Activated naive CD4-positive, alpha-beta T cell treated with anti-CD3 and anti-CD28 coated beads for 36 hours (primary cell): ENCODE measurements at regions of chr12 and their contacts with region 1.

Region 1: DNA sequence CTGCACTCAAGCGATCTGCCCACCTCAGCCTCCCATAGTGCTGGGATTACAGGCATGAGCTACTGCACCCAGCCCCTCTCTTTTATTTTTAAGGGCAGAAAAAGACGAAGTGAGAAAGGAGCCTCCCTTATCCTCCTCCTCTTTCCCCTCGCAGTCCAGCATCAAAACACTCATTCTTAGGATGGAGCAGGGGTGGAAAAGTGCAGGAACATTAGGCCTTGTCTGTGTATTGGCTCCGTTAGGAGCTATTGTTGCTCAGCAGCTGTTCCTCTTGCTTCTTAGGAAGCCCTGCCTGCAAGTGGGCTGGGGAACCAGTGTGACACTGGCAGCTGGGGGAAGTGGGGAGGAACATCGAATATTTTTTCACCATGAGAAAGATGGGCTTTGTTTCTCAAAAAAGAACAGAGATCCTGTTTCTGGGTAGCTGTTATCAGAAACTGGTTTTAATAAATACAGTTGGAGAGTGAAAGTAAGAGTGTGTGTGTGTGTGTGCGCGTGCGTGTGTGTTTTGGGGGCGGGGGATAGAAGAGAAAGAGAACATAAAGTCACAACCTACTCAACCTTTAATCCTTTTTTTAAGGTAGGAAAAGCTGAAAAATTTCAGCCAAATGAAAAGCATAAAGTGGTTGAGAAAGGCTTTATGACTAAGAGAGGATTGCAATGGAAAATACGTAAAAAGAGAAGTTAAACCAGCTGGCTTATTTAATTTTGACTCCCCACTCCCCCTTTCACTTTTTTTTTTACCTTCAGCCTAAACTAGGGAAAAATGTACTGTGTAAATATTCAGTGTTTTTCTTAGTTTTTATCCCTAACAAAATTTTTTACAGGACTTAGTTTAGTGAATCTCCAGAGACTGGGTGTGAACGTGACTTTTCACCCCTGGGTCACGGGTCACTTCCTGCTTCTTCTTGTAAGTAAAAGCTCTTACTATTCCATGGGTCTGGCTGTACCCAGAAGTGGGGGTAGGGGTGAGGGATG is 197.2 kb upstream of the PLEKHG7 start:
- DNase-seq: peak; percentile 77
- H3K4me3 Mint-ChIP-seq: peak overlapping the region; percentile 69
- H3K27ac Mint-ChIP-seq: peak overlapping the region; percentile 89
- H3K4me1 Mint-ChIP-seq: peaks cover 56% of the 10 kb centered on the region
- H3K27me3 Mint-ChIP-seq: no peaks in the 10 kb centered on the region

Region 2: GRCh38 chr12:91382081-91382543 is 1123.4 kb before region 1 on chr12:
- CTCF ChIA-PET with region 1: no interaction called
- intact Hi-C with region 1: loop called (anchors 5 kb)
- DNase-seq: peak; percentile 92
- H3K4me3 Mint-ChIP-seq: peak overlapping the region; percentile 76
- H3K27ac Mint-ChIP-seq: no peak overlapping the region
- H3K4me1 Mint-ChIP-seq: peaks cover 5% of the 10 kb centered on the region
- H3K27me3 Mint-ChIP-seq: no peaks in the 10 kb centered on the region

Region 3: GRCh38 chr12:91991399-91992187 is 514.0 kb before region 1 on chr12:
- CTCF ChIA-PET with region 1: no interaction called
- intact Hi-C with region 1: loop called (anchors 2 kb)
- DNase-seq: no peak
- H3K4me3 Mint-ChIP-seq: no peak overlapping the region
- H3K27ac Mint-ChIP-seq: no peak overlapping the region
- H3K4me1 Mint-ChIP-seq: peaks cover 61% of the 10 kb centered on the region
- H3K27me3 Mint-ChIP-seq: no peaks in the 10 kb centered on the region

Region 4: DNA sequence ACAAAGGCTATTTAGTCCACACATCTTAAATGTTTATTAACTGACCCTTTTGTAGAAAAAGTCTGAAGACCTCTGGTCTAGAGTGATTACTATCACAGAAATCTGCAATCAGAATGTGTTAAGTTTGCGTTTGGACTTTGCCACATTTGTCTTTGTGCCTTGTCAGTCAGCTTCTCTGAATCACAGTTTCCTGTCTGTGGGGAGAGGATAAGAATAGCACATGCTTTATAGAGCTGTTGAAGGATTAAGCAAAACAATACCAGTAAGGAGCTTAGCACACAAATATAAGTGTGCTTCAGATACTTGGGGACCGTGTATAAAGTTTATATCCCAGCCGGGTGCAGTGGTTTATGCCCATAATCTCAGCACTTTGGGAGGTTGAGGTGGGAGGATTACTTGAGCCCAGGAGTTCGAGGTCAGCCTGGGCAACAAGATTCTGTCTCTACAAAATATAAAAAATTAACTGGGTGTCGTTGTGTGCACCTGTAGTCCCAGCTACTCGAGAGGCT is 296.9 kb before region 1 on chr12:
- CTCF ChIA-PET with region 1: no interaction called
- intact Hi-C with region 1: loop called (anchors 1 kb)
- DNase-seq: peak; percentile 42
- H3K4me3 Mint-ChIP-seq: peak overlapping the region; percentile 66
- H3K27ac Mint-ChIP-seq: peak overlapping the region; percentile 86
- H3K4me1 Mint-ChIP-seq: peaks cover 45% of the 10 kb centered on the region
- H3K27me3 Mint-ChIP-seq: no peaks in the 10 kb centered on the region

Region 5: DNA sequence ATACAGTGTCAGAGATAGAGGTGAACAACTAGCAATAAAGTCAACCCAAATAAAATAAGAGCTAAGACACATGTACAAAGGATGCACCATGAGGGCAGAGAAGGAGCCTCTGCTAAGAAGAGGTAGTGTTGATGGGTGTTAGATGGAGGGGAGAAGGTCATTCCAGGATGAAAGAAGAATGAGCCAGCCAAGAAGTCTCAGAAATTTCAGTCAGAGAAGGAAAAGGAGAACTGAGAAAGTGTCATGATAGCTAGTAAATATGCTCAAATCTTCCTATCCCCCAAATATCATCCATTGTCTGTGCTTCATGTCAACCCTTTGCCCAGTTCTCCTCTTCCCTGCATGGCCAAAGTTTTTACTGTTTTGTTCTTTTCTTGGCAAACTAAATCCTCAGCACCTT is 134.7 kb before region 1 on chr12:
- CTCF ChIA-PET with region 1: no interaction called
- intact Hi-C with region 1: no loop called
- DNase-seq: no peak
- H3K4me3 Mint-ChIP-seq: no peak overlapping the region
- H3K27ac Mint-ChIP-seq: no peak overlapping the region
- H3K4me1 Mint-ChIP-seq: peaks cover 35% of the 10 kb centered on the region
- H3K27me3 Mint-ChIP-seq: no peaks in the 10 kb centered on the region

Region 6: GRCh38 chr12:92493816-92494215 is 11.7 kb before region 1 on chr12:
- CTCF ChIA-PET with region 1: interaction called, 26 read pairs
- intact Hi-C with region 1: no loop called
- DNase-seq: no peak
- H3K4me3 Mint-ChIP-seq: no peak overlapping the region
- H3K27ac Mint-ChIP-seq: no peak overlapping the region
- H3K4me1 Mint-ChIP-seq: peaks cover 24% of the 10 kb centered on the region
- H3K27me3 Mint-ChIP-seq: no peaks in the 10 kb centered on the region

Region 7: GRCh38 chr12:92570056-92570753 is 64.7 kb after region 1 on chr12:
- CTCF ChIA-PET with region 1: interaction called, 67 read pairs
- intact Hi-C with region 1: loop called (anchors 1 kb)
- DNase-seq: peak; percentile 67
- H3K4me3 Mint-ChIP-seq: no peak overlapping the region
- H3K27ac Mint-ChIP-seq: no peak overlapping the region
- H3K4me1 Mint-ChIP-seq: peaks cover 32% of the 10 kb centered on the region
- H3K27me3 Mint-ChIP-seq: no peaks in the 10 kb centered on the region

Region 8: DNA sequence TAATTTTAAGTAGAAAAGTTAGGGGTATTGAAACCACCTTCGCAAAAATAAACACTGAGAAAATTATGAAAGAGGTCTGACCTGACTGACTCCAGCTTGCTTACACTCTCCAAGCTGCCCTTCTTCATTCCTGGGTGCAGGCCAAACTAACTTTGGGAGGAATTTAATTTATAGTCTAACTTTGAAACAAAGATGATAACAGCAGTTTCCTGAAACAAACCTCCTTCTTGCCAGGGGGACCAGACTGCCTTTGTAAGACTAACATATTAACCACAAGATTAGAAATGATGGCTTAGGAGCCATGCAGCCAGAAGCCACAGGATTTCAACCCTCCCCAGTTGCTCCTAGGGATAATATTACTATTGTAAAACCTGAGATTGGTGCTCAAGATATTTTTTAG is 437.4 kb after region 1 on chr12:
- CTCF ChIA-PET with region 1: no interaction called
- intact Hi-C with region 1: no loop called
- DNase-seq: no peak
- H3K4me3 Mint-ChIP-seq: no peak overlapping the region
- H3K27ac Mint-ChIP-seq: no peak overlapping the region
- H3K4me1 Mint-ChIP-seq: no peaks in the 10 kb centered on the region
- H3K27me3 Mint-ChIP-seq: no peaks in the 10 kb centered on the region